ENCODE measurements at regions of chr1 and their contacts with region 1.

Region 1: DNA sequence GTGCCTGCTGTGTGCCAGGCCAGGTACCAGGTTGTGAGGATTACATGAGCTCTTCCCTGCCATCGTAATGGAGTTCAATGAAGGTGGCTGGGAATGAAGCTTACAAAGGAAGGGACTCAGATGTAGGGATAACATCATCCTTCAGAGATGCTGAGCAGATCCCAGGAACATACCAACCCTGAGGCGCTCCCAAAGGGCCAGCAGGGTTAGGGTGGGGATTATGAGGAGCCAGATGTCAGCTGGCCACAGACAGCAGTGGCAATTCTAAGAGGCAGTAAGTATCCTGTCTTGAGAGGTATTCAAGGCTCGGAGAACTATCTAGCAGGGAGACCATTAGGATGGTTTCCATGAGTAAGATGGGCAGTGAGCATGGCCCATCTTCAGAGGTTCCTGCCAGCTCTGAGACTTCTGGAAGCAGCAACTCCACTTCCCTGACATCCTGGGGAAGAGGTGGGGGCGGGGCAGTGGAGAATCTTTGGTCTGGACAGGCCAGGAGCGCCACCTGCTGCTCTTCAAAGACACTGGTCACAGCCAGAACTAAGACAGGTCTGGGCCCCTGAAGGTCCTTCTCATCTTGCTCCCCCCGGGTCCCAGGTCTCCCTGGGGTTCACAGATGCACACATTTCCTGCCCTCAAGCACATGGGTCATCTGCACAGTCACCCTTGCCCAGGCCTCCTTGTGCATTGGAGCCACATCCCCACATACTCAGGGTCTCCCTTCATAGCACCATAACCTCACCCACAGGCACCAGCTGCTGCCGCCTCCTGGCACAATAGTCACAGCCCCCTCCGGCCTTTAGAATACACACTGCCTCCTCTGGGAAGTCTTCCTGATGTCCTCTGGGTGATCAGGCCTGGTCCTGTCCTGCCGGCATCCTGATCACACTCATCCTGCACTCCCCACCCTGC is 2.7 kb upstream of the SDC3 start:
- DNase-seq: peak; percentile 87 to 93 (median 88)
- ATAC-seq: peak; percentile 68 to 89 (median 78)
- H3K4me3 ChIP-seq: no peak overlapping the region
- H3K27ac ChIP-seq: peak overlapping the region in 2 of 12 donors; percentile 33 to 84
- H3K4me1 ChIP-seq: peaks cover 0 to 64% (median 17%) of the 10 kb centered on the region in 12 donors
- H3K27me3 ChIP-seq: no peaks in the 10 kb centered on the region
- CTCF ChIP-seq: peak; percentile 76 to 95 (median 88)
- POLR2A ChIP-seq: no peak

Region 2: DNA sequence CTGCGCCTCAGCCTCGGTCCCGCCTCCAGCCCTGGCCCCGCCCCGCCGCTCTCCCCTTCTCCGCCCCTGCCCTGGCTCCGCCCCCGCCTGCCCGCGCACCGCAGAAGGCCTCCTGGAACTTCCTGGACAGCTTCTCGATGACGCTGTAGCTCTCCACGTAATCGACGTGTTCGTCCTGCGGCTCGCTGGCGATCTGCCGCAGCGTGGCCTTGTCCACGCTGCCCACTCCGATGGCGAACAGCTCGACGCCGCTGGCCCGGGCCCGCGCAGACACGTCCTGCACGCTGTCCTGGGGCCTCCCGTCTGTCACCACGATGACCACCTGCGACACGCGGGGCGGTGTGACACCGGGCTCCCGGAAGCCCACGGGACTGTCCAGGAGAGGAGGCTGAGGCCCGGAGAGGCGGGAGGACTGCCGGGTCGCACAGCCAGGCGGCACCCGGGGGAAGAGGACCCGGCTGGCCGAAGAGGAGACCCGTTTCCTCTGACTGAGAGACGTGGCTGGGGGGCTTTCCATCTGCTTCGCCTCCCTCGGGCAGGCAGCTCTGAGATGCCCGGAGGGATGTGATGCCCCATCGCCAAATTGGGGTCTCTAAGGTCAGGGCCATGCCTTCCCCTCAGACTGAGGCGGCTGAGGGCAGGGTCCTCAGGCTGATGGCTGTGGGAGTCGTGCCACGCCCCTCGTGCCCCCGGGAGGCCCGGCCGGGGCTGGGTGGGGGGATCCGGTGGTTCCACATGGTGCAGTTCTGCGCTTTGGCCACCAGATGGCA is 192.5 kb before region 1 on chr1:
- intact Hi-C with region 1: loop called (anchors 1 to 10 kb)
- DNase-seq: peak in 4 of 5 donors; percentile 80 to 98 (median 86)
- ATAC-seq: peak; percentile 73 to 88 (median 86)
- H3K4me3 ChIP-seq: peak overlapping the region; percentile 24 to 71 (median 56)
- H3K27ac ChIP-seq: peak overlapping the region; percentile 80 to 100 (median 95)
- H3K4me1 ChIP-seq: peaks cover 0 to 15% (median 8%) of the 10 kb centered on the region in 12 donors
- H3K27me3 ChIP-seq: no peaks in the 10 kb centered on the region
- CTCF ChIP-seq: peak; percentile 95 to 99 (median 98)
- POLR2A ChIP-seq: peak in 1 of 2 donors; percentile 73

Region 3: DNA sequence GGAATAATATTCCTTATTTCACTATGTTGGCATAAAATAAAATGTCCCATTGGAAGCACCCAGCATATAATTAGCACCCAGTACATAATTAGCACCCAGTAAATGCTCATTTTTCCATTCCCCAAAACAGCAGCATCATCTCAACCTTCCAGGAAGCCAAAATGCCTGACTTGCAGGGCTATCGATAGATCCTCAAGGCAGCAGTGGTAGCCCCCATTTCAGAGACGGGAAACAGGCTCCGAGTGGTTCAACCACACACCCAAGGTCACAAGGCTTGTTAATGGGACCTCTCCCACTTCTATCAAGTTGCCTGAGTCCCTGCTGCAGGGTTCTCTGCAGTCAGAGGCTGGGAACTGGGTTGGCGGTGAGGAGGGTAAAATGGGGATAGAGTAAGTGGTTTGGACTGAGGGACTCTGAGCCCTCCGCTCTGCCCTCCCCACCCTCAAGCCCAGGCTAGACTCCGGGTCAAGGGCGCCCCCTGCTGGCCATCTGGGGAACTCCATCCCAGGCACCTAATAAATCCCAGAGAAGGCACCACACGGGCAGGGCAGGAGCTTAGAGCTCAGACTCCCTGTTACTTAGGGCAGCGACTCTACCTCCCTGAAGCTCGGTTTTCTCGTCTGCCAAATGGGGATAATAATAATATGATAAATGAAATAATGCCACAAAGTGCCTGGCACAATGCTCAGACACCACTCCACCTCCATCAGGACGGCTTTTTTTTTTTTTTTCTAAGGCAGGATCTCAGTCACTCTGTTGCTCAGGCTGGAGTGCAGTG is 131.8 kb before region 1 on chr1:
- intact Hi-C with region 1: loop called (anchors 1 to 5 kb)
- DNase-seq: peak; percentile 72 to 91 (median 78)
- ATAC-seq: peak; percentile 27 to 74 (median 73)
- H3K4me3 ChIP-seq: no peak overlapping the region
- H3K27ac ChIP-seq: peak overlapping the region in 1 of 12 donors; percentile 75
- H3K4me1 ChIP-seq: peaks cover 0 to 42% (median 4%) of the 10 kb centered on the region in 12 donors
- H3K27me3 ChIP-seq: peaks cover 0 to 10% (median 0%) of the 10 kb centered on the region in 9 donors
- CTCF ChIP-seq: peak; percentile 88 to 99 (median 94)
- POLR2A ChIP-seq: no peak

Region 4: GRCh38 chr1:30801771-30802198 is 109.5 kb before region 1 on chr1:
- intact Hi-C with region 1: loop called (anchors 1 to 2 kb)
- DNase-seq: peak; percentile 75 to 92 (median 81)
- ATAC-seq: peak; percentile 58 to 77 (median 66)
- H3K4me3 ChIP-seq: peak overlapping the region in 1 of 12 donors; percentile 33
- H3K27ac ChIP-seq: peak overlapping the region in 1 of 12 donors; percentile 46
- H3K4me1 ChIP-seq: peaks cover 3 to 43% (median 16%) of the 10 kb centered on the region in 12 donors
- H3K27me3 ChIP-seq: peaks cover 0 to 15% (median 0%) of the 10 kb centered on the region in 9 donors
- CTCF ChIP-seq: peak; percentile 93 to 99 (median 96)
- POLR2A ChIP-seq: no peak

Region 5: DNA sequence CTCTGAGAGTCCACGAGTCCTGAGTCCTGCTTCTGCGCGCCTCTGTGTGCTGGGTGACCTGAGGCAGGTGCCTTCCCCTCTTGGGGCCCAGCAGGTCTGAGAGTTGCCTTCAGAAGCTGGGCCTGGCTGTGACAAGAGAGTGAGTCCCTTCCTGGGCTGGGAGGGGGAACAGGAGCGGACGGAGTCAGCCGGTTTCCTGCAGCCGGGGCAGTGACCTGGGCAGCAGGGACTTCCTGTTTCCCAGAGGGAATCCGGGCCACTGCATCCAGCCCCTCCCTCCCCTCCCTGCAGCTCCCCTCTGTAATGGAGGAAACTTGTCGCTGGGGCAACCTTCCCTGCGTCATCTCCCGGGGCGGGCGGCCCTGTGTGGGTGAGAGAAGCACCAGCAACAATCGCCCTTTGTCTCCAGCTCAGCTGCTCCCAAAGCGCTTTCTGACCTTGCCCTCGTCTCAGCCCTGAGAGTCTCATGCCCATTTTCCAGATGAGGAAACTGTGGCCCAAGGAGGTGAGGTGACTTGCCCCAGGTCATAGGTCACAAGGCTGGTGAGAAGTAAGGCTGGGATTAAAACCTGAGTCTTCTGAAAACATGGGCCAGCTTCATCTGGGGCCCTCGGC is 63.8 kb before region 1 on chr1:
- intact Hi-C with region 1: loop called in 5 of 10 experiments (anchors 2 to 10 kb)
- DNase-seq: peak; percentile 89 to 94 (median 91)
- ATAC-seq: peak; percentile 73 to 94 (median 92)
- H3K4me3 ChIP-seq: no peak overlapping the region
- H3K27ac ChIP-seq: peak overlapping the region; percentile 60 to 90 (median 82)
- H3K4me1 ChIP-seq: peaks cover 0 to 34% (median 20%) of the 10 kb centered on the region in 12 donors
- H3K27me3 ChIP-seq: peaks cover 0 to 33% (median 0%) of the 10 kb centered on the region in 9 donors
- CTCF ChIP-seq: no peak
- POLR2A ChIP-seq: no peak

Measured in heart left ventricle (tissue), 16 donors.